T-cell (primary cell): ENCODE measurements at regions of chr15 and their contacts with region 1.

Region 1: DNA sequence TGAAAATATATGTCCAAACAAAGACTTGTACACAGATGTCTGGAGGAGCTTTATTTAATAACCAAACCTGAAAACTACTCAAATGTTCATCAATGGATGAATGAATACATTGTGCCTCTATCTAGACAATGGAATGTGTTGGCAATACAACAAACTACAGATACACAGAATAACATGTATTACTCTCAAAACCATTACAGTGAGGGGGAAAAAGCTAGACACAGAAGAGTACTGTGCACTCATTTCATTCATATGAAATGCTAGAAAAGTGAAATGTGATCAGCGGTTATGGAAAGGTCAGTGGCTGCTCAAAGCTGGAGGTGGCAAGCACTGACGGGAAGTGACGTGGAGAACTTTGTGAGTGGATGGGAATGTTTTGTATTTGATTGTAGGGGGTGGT is 13.2 kb downstream of the STOML1 start:
- DNase-seq: no peak
- ATAC-seq: no peak
- H3K4me3 ChIP-seq: no peak overlapping the region
- H3K4me3 Mint-ChIP-seq: no peak overlapping the region
- H3K27ac ChIP-seq: no peak overlapping the region
- H3K27ac Mint-ChIP-seq: no peak overlapping the region
- H3K4me1 ChIP-seq: peaks cover 2 to 42% of the 10 kb centered on the region in 2 experiments
- H3K4me1 Mint-ChIP-seq: peaks cover 47 to 55% (median 51%) of the 10 kb centered on the region in 3 donors
- H3K27me3 ChIP-seq: peaks cover 0 to 30% of the 10 kb centered on the region in 2 experiments
- H3K27me3 Mint-ChIP-seq: peaks cover 4 to 20% of the 10 kb centered on the region in 2 donors

Region 2: DNA sequence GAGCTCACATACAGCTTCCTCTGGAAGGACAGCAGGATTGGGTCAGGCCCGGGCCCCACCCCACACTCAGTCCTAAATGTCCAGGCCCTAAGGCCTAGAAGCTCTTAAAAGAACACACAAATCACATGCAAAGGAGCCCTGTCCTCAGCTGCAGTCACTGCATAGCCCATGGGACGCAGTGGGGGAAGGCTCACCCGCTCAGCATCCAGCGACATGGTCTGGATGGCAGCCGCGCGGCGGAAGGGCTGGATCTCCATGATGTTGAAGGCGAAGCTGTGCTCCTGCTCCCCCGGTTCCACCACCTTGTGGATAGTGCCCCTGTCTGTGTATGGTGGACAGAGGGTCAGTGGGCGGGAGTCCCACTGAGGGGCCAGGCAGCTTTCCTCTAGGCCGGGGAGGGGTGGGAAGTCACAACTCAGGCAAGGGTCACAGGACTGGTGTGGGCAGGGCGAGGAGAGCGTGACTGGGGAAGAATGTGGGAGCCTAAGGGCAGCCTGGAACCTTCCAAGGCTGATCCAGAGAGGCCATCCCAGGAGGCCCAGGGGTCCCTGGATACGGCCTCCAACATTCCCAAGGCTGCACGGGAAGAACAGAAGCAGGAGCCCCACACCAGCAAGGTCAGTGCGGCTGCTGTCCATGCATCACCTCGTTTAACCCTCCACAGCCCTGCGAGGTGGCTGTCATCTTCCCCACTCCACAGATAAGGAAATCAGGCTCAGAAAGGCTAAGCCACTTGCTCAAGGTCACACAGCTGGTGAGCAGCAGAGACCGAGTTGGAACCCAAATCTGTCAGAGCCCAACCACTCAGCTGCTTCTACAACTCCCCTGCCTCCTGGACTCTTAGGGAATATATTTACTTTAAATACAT is 433.0 kb after region 1 on chr15:
- CTCF ChIA-PET with region 1: no interaction called
- POLR2A ChIA-PET with region 1: no interaction called
- DNase-seq: no peak
- ATAC-seq: no peak
- H3K4me3 ChIP-seq: no peak overlapping the region
- H3K4me3 Mint-ChIP-seq: no peak overlapping the region
- H3K27ac ChIP-seq: no peak overlapping the region
- H3K27ac Mint-ChIP-seq: no peak overlapping the region
- H3K4me1 ChIP-seq: peaks cover 8 to 13% of the 10 kb centered on the region in 2 experiments
- H3K4me1 Mint-ChIP-seq: peaks cover 0 to 5% (median 0%) of the 10 kb centered on the region in 3 donors
- H3K27me3 ChIP-seq: no peaks in the 10 kb centered on the region
- H3K27me3 Mint-ChIP-seq: no peaks in the 10 kb centered on the region

Region 3: DNA sequence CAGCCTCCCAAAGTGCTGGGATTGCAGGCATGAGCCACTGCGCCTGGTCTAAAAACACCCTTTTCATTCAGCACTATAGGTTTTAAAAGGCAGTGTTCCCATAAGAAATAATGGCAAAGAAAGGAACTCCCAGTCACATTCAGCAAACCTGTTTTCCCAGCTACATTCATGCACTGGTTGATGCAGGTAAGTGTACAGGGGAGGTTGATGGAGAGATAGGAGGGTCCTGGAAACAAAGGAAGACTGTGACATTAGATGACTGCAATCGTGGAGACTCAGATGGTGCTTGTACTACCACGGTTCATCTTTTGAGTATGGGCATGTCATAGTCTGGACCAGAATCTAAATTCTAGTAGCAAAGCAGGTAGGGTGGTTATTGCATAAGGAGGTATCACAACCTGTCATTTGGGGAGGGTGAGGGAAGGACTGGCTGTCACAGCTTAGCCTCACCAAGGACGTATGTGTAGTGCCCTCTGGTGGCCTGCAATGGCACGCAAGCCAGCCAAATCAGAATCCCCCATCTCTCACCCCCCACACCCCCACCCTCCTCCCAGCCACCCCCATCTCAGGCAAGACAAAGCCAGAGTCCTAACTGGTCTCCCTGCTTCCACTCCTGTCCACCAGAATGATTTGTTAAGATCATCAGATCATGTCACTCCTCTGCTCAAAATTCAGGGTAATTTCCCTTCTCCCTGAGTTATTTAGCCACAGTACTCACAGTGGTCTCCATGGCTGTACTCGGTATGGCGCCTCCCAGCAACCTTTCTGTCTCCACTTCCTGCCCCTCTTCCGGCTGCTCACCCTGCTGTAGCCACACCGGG is 510.8 kb after region 1 on chr15:
- CTCF ChIA-PET with region 1: no interaction called
- POLR2A ChIA-PET with region 1: interaction called in 1 of 2 experiments, 18 read pairs
- DNase-seq: peak; percentile 42 to 84 (median 69)
- ATAC-seq: peak; percentile 88 to 91 (median 90)
- H3K4me3 ChIP-seq: no peak overlapping the region
- H3K4me3 Mint-ChIP-seq: peak overlapping the region; percentile 6 to 57 (median 51)
- H3K27ac ChIP-seq: no peak overlapping the region
- H3K27ac Mint-ChIP-seq: peak overlapping the region; percentile 13 to 73
- H3K4me1 ChIP-seq: peaks cover 3 to 14% of the 10 kb centered on the region in 2 experiments
- H3K4me1 Mint-ChIP-seq: peaks cover 14 to 17% (median 16%) of the 10 kb centered on the region in 3 donors
- H3K27me3 ChIP-seq: no peaks in the 10 kb centered on the region
- H3K27me3 Mint-ChIP-seq: no peaks in the 10 kb centered on the region